ENCODE measurements at regions of chr16 and their contacts with region 1.

Region 1: DNA sequence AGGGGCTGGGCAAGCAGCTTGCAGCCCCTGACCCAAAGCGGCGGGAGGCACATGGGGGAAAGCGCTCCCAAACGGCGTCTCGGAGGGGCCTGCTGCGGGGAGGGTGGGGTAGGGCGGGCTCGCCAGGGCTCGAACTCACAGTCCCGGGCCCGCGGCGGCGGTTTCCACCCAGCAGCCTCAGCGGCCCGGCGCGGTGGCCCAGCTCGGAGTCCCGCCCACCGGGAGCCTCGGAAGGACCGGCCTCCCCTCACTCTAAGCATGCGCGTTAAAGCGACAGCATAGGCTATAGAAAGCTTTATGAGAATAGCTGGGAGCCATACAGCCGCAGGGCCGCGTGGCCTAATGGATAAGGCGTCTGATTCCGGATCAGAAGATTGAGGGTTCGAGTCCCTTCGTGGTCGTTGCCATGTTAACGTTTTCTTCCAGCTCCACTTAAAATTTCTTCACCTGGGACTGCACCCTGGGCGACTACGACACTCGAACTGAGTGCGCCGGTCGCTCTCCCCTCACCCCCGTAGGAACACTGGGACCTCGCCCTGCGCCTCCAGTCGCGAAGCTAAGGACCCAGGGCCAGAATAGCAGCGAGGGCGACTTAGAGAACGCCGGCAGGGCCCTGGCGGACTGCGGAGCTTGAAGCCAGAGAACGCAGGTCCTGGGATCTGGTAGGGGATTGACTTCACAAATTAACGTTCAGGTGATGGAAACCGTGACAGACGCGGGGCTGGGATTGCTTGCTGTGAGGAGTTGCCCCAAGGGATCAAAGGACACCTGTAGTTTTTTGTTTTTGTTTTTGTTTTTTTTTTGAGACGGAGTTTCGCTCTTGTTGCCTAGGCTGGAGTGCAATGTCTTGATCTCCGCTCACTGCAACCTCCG is 15.8 kb downstream of the ZNF213 start:
- DNase-seq: peak; percentile 99
- ATAC-seq: peak; percentile 85
- H3K4me3 Mint-ChIP-seq: peak overlapping the region; percentile 79
- H3K27ac Mint-ChIP-seq: peak overlapping the region; percentile 89
- H3K4me1 Mint-ChIP-seq: peaks cover 22% of the 10 kb centered on the region
- H3K27me3 Mint-ChIP-seq: peaks cover 2% of the 10 kb centered on the region

Region 2: GRCh38 chr16:3059000-3059722 is 91.4 kb before region 1 on chr16:
- CTCF ChIA-PET with region 1: interaction called, 5 read pairs
- POLR2A ChIA-PET with region 1: no interaction called
- intact Hi-C with region 1: loop called in 1 of 2 experiments (anchors 1 kb)
- DNase-seq: peak; percentile 93
- ATAC-seq: peak; percentile 83
- H3K4me3 Mint-ChIP-seq: peak overlapping the region; percentile 84
- H3K27ac Mint-ChIP-seq: peak overlapping the region; percentile 93
- H3K4me1 Mint-ChIP-seq: peaks cover 62% of the 10 kb centered on the region
- H3K27me3 Mint-ChIP-seq: no peaks in the 10 kb centered on the region

Region 3: DNA sequence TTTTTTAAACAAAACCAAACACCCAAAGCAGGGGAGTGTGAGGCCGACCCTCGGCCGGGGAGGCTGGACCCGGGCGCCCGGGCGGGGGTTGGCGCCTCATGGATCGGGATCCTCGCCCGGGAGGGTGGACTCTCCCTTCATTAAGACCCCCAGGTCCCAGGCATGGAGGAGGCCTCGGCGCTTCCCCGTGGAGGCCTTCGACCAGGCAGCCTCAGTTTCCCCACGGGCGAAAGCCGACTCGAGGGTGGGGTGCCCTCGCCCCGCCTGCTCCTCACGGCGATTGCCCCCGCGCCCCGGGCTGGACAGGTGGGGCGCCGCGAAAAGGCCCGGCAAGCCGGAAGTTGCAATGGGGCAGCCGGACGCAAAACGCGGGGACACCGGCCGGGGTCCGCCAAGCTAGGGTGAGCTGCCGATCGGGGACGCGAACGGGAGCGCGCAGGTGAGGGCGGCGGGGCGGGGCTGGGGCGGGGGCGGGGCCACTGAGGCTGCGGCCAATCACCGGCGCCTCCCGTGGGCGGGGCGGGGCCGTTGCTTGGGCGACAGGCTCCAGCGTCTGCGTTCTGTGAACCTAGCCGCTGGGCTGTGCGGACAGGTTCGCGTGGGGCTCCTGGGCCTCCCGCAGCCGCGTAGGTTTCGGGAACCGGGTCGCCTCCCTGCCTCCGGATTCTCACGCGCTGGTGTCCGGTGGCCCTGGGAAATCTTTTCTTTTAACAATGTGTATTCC is 44.2 kb before region 1 on chr16:
- CTCF ChIA-PET with region 1: interaction called, 4 read pairs
- POLR2A ChIA-PET with region 1: no interaction called
- intact Hi-C with region 1: loop called in 1 of 2 experiments (anchors 1 kb)
- DNase-seq: peak; percentile 96
- ATAC-seq: peak; percentile 88
- H3K4me3 Mint-ChIP-seq: peak overlapping the region; percentile 76
- H3K27ac Mint-ChIP-seq: peak overlapping the region; percentile 94
- H3K4me1 Mint-ChIP-seq: peaks cover 31% of the 10 kb centered on the region
- H3K27me3 Mint-ChIP-seq: no peaks in the 10 kb centered on the region

Region 4: DNA sequence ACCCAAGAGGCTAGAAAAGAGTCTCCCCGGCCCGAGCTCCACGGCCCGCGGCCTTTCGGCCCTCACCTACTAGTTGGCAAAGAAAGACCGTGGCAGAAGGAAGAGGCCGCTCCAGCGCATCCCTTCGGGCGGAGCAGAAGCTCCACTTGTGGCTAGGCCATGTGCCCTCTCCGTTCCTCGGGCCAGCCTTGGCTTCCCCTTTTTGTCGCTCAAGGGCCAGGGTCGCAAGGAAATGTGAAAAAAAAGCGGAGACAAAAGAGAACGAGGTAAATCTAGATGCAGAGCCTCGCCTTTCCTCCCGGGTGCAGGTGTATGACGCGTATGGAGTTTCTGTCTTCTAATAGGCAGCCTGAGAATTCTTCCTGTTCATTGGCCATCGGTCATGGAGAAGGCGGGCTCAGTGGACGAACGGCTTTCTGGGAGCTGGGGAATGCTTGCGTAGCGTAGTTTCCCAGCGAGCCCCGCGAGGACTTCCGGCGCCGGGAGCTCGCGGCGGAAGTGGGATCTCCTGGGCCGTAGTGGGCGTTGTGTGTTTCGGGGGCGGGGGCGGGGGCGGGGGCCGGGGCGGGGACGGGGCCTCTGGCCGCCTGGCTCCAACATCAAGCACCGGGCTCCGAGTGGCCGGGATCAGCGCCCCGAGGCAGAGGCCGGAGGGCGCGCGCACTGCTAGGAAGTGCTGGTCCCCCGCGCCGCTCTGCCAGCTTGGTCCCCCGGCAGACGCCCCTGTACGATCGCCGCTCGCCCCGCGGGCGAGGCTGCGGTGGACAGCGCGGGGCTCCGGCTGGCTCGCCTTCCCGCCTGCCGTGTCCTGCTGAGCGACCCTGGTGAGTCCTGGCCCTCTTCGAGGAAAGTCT is 15.8 kb before region 1 on chr16 and contains the start of gene ZNF213:
- CTCF ChIA-PET with region 1: interaction called, 27 read pairs
- POLR2A ChIA-PET with region 1: interaction called, 16 read pairs
- intact Hi-C with region 1: loop called (anchors 1 kb)
- DNase-seq: peak; percentile 96
- ATAC-seq: peak; percentile 97
- H3K4me3 Mint-ChIP-seq: peak within 1 kb of the TSS; percentile 98
- H3K27ac Mint-ChIP-seq: peak within 1 kb of the TSS; percentile 95
- H3K4me1 Mint-ChIP-seq: peaks cover 30% of the 10 kb centered on the region
- H3K27me3 Mint-ChIP-seq: no peaks in the 10 kb centered on the region
- total RNA-seq, gene ZNF213: 7.6 to 8.3 TPM

Region 5: DNA sequence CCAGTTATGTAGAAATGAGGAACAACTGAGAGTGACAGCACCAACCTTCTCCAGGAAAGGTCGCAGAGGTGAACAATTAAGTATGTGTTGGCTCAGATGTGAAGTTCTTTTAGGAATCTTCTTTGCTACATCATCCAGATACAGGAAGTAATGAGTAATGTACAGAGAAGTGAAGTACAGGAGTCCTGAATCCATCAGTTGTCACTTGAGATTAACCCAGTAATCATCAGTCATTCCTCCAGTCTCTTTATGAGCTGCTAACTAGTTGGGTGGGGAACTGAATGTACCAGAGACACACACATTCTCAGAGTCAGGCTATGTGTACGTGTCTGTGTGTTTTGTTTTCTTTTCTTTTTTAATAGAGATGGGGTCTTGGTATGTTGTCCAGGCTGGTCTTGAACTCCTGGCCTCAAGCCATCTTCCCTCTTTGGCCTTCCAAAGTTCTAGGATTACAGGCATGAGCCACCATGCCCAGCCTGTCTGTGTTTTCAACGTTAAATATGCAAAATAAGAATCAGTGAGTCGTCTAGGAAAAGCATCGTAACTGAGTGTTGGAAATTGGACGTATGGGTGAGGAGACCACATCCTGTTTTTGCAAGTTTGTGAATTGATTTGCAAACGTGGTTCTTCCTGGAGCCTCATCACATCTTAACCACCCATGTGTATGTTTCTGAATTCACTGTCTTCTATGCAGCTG is 64.5 kb after region 1 on chr16:
- CTCF ChIA-PET with region 1: no interaction called
- POLR2A ChIA-PET with region 1: interaction called, 13 read pairs
- intact Hi-C with region 1: loop called in 1 of 2 experiments (anchors 2 kb)
- DNase-seq: peak; percentile 49
- ATAC-seq: peak; percentile 82
- H3K4me3 Mint-ChIP-seq: peak overlapping the region; percentile 4
- H3K27ac Mint-ChIP-seq: peak overlapping the region; percentile 94
- H3K4me1 Mint-ChIP-seq: peaks cover 32% of the 10 kb centered on the region
- H3K27me3 Mint-ChIP-seq: no peaks in the 10 kb centered on the region

Region 6: GRCh38 chr16:3282730-3283524 is 132.3 kb after region 1 on chr16 and contains the start of gene ZNF263:
- CTCF ChIA-PET with region 1: interaction called, 3 read pairs
- POLR2A ChIA-PET with region 1: no interaction called
- intact Hi-C with region 1: loop called in 1 of 2 experiments (anchors 1 kb)
- DNase-seq: peak; percentile 96
- ATAC-seq: peak; percentile 91
- H3K4me3 Mint-ChIP-seq: peak within 1 kb of the TSS; percentile 90
- H3K27ac Mint-ChIP-seq: peak within 1 kb of the TSS; percentile 97
- H3K4me1 Mint-ChIP-seq: peaks cover 24% of the 10 kb centered on the region
- H3K27me3 Mint-ChIP-seq: no peaks in the 10 kb centered on the region
- total RNA-seq, gene ZNF263: 19.2 to 19.6 TPM